IMR-90 (cell line): ENCODE measurements at regions of chr7 and their contacts with region 1.

Region 1: DNA sequence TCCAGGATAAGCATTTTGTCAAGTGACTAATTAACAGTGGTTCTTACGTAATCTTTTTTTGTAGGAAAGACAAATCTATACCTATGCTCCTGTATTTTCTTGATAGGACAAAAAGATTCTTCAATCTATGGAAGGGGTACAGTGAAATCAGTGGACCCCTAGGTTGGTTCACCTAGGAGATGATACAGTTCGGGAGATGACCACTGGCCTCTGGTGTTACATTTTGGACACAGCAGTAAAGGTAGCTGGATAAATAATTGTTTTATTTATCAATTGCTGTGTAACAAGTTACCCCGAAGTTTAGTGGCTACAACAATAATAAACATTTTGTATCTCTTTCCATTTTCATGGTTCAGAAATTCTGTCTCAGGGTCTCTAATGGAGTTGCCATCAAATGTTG is 288.2 kb upstream of the MAGI2 start:
- DNase-seq: no peak
- ATAC-seq: peak; percentile 42; the same call in 1 of the 2 replicates
- H3K4me3 ChIP-seq: no peak overlapping the region
- H3K27ac ChIP-seq: no peak overlapping the region
- H3K4me1 ChIP-seq: no peaks in the 10 kb centered on the region
- H3K27me3 ChIP-seq: no peaks in the 10 kb centered on the region
- CTCF ChIP-seq: peak; percentile 36; the same call in 1 of the 2 replicates
- POLR2A ChIP-seq: no peak
- RAD21 ChIP-seq: peak; percentile 50

Region 2: DNA sequence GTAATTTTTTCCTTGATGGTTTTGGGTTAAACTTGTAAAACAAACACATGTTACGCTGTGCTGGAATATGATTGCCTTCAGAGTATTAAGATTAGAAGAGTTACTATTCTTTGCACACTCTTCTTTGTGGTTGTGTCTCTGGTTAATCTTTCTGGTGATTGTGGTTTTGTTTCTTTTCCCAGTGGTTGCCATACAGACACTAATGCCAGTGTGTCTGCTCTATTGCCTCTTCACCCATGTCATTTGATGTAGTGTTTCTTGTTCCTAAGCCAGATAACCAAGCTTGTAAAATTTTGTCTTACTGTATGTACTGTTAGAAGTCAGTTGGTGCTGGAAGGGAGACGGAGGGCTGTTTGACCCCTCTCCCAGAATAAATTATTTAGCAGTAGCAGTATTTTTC is 1818.3 kb before region 1 on chr7:
- CTCF ChIA-PET with region 1: no interaction called
- POLR2A ChIA-PET with region 1: no interaction called
- dilution Hi-C with region 1: no loop called
- in situ Hi-C with region 1: no loop called
- intact Hi-C with region 1: no loop called
- DNase-seq: no peak
- ATAC-seq: no peak
- H3K4me3 ChIP-seq: no peak overlapping the region
- H3K27ac ChIP-seq: no peak overlapping the region
- H3K4me1 ChIP-seq: no peaks in the 10 kb centered on the region
- H3K27me3 ChIP-seq: no peaks in the 10 kb centered on the region
- CTCF ChIP-seq: no peak
- POLR2A ChIP-seq: no peak
- RAD21 ChIP-seq: no peak

Region 3: GRCh38 chr7:79298145-79298760 is 443.4 kb before region 1 on chr7:
- CTCF ChIA-PET with region 1: no interaction called
- POLR2A ChIA-PET with region 1: no interaction called
- dilution Hi-C with region 1: no loop called
- in situ Hi-C with region 1: no loop called
- intact Hi-C with region 1: loop called (anchors 5 kb)
- DNase-seq: peak; percentile 79
- ATAC-seq: peak; percentile 65
- H3K4me3 ChIP-seq: no peak overlapping the region
- H3K27ac ChIP-seq: no peak overlapping the region
- H3K4me1 ChIP-seq: peaks cover 3% of the 10 kb centered on the region; the same call in 1 of the 2 replicates
- H3K27me3 ChIP-seq: no peaks in the 10 kb centered on the region
- CTCF ChIP-seq: peak; percentile 70
- POLR2A ChIP-seq: no peak
- RAD21 ChIP-seq: peak; percentile 73